Activated naive CD4-positive, alpha-beta T cell treated with anti-CD3 and anti-CD28 coated beads for 36 hours (primary cell): ENCODE measurements at regions of chr4 and their contacts with region 1.

Region 1: DNA sequence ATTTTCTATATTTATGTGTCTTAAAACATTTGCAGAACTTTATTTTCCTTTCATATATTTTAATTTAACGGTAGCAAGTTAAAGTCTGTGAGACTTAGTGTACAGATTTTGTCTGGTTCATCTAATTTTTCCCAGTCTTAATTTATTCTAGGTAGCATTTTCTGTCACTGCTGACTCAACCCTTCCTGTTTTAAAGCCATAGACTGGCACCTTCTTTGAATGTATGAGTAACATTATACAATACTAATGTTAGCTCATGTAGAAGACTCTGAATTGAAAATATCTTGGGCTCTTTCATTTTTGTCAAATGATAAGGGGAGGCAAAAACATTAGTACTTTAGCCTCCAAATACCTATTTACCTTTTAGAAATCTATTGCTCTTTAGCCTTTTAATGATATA is 43.6 kb downstream of the BLTP1 start:
- DNase-seq: peak; percentile 8
- H3K4me3 Mint-ChIP-seq: no peak overlapping the region
- H3K27ac Mint-ChIP-seq: no peak overlapping the region
- H3K4me1 Mint-ChIP-seq: peaks cover 14% of the 10 kb centered on the region
- H3K27me3 Mint-ChIP-seq: no peaks in the 10 kb centered on the region

Region 2: GRCh38 chr4:121913667-121914066 is 282.1 kb before region 1 on chr4:
- CTCF ChIA-PET with region 1: no interaction called
- intact Hi-C with region 1: no loop called
- DNase-seq: no peak
- H3K4me3 Mint-ChIP-seq: no peak overlapping the region
- H3K27ac Mint-ChIP-seq: no peak overlapping the region
- H3K4me1 Mint-ChIP-seq: peaks cover 5% of the 10 kb centered on the region
- H3K27me3 Mint-ChIP-seq: peaks cover 2% of the 10 kb centered on the region

Region 3: GRCh38 chr4:122178961-122179360 is 16.8 kb before region 1 on chr4:
- CTCF ChIA-PET with region 1: no interaction called
- intact Hi-C with region 1: loop called (anchors 2 kb)
- DNase-seq: no peak
- H3K4me3 Mint-ChIP-seq: no peak overlapping the region
- H3K27ac Mint-ChIP-seq: no peak overlapping the region
- H3K4me1 Mint-ChIP-seq: no peaks in the 10 kb centered on the region
- H3K27me3 Mint-ChIP-seq: no peaks in the 10 kb centered on the region

Region 4: GRCh38 chr4:122259849-122260248 is 64.1 kb after region 1 on chr4:
- CTCF ChIA-PET with region 1: no interaction called
- intact Hi-C with region 1: no loop called
- DNase-seq: no peak
- H3K4me3 Mint-ChIP-seq: no peak overlapping the region
- H3K27ac Mint-ChIP-seq: no peak overlapping the region
- H3K4me1 Mint-ChIP-seq: no peaks in the 10 kb centered on the region
- H3K27me3 Mint-ChIP-seq: no peaks in the 10 kb centered on the region